MCF 10A (cell line): ENCODE measurements at regions of chr11 and their contacts with region 1.

Region 1: DNA sequence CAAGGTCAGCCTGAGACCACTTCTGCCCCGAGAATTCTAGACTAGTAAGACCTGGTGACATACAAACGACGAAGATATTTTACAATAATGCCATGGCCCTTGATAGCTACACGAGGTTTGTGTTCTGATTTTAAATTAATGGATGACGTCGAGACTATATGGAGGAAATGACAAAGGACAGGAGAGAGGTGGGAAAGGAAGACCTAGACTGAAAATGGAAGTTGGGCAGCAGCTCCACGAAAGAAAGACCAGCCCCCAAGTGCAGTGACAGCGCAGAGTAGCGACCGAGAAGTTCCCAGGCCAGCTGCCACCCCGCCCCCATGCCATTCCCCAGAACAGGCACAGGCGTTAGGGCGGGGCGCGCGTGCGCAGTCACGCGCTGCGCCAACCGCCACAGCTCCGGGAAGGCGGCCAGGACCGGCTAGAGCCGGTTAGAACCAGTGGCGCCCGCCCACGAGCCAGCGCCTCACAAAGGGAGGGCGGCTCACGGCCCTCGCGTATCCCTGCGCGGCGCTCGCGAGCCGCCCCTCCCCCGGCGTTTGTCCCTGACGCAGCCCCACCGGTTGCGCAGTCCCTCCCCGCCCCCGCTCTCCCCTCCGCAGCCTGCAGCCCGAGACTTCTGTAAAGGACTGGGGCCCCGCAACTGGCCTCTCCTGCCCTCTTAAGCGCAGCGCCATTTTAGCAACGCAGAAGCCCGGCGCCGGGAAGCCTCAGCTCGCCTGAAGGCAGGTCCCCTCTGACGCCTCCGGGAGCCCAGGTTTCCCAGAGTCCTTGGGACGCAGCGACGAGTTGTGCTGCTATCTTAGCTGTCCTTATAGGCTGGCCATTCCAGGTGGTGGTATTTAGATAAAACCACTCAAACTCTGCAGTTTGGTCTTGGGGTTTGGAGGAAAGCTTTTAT is 1.5 kb upstream of the MALAT1 start:
- DNase-seq: peak; percentile 98
- H3K4me3 Mint-ChIP-seq: no peak overlapping the region
- H3K27ac Mint-ChIP-seq: no peak overlapping the region
- H3K4me1 Mint-ChIP-seq: peaks cover 17% of the 10 kb centered on the region
- H3K27me3 Mint-ChIP-seq: no peaks in the 10 kb centered on the region
- CTCF ChIP-seq: no peak

Region 2: GRCh38 chr11:65382033-65382807 is 115.2 kb before region 1 on chr11 and contains the start of gene SLC25A45:
- CTCF ChIA-PET with region 1: interaction called, 6 read pairs
- POLR2A ChIA-PET with region 1: interaction called, 342 read pairs
- intact Hi-C with region 1: no loop called
- DNase-seq: peak; percentile 99
- H3K4me3 Mint-ChIP-seq: peak within 1 kb of the TSS; percentile 68
- H3K27ac Mint-ChIP-seq: peak within 1 kb of the TSS; percentile 97
- H3K4me1 Mint-ChIP-seq: peaks cover 26% of the 10 kb centered on the region
- H3K27me3 Mint-ChIP-seq: no peaks in the 10 kb centered on the region
- CTCF ChIP-seq: peak; percentile 86
- total RNA-seq, gene SLC25A45: 3.9 and 4.9 TPM in 2 replicates

Region 3: GRCh38 chr11:65440831-65441499 is 56.4 kb before region 1 on chr11:
- CTCF ChIA-PET with region 1: interaction called, 3 read pairs
- POLR2A ChIA-PET with region 1: interaction called, 213 read pairs
- intact Hi-C with region 1: no loop called
- DNase-seq: peak; percentile 40
- H3K4me3 Mint-ChIP-seq: peak overlapping the region; percentile 41
- H3K27ac Mint-ChIP-seq: peak overlapping the region; percentile 93
- H3K4me1 Mint-ChIP-seq: peaks cover 72% of the 10 kb centered on the region
- H3K27me3 Mint-ChIP-seq: no peaks in the 10 kb centered on the region
- CTCF ChIP-seq: no peak

Region 4: DNA sequence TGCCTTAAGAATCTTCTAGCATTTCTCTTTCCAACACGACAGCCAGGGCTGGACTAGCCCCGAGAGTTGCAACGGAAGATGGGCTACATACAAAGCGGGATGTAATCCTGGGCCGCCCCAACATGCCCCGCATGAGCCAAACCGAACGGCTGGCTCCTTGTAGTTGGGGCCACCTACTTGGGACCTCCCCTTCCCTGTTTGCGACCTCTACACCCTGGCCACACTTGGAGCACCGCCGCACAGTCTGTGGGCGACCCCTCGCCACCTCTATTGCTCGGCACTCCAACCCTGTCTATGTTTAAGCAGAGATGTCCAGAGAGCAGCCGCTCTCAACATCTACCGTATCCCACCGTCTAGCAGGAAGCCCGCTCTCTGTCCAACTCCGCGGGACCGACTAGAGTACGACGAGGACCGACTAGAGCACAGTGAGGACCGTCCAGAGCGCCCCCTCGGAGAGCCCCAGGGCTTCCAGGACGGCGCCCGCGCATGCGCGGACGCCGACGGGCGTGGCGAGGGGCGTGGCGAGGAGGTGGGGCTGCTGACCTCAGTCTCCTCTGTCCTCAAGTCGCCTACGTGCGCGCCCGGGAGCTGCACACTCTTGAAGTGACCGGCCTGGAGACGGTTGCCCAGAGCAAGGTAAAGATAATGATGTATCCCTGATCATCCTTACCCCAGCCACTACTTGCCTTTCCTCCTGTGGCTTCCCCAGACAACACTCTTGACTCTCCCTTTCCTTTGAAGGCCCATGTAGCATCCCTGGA is 42.5 kb before region 1 on chr11:
- CTCF ChIA-PET with region 1: no interaction called
- POLR2A ChIA-PET with region 1: interaction called, 213 read pairs
- intact Hi-C with region 1: loop called (anchors 2 kb)
- DNase-seq: no peak
- H3K4me3 Mint-ChIP-seq: peak overlapping the region; percentile 66
- H3K27ac Mint-ChIP-seq: peak overlapping the region; percentile 27
- H3K4me1 Mint-ChIP-seq: peaks cover 9% of the 10 kb centered on the region
- H3K27me3 Mint-ChIP-seq: no peaks in the 10 kb centered on the region
- CTCF ChIP-seq: no peak

Region 5: GRCh38 chr11:65477149-65477965 is 20.0 kb before region 1 on chr11:
- CTCF ChIA-PET with region 1: interaction called, 25 read pairs
- POLR2A ChIA-PET with region 1: interaction called, 2,284 read pairs
- intact Hi-C with region 1: loop called (anchors 1 kb)
- DNase-seq: peak; percentile 96
- H3K4me3 Mint-ChIP-seq: peak overlapping the region; percentile 95
- H3K27ac Mint-ChIP-seq: peak overlapping the region; percentile 95
- H3K4me1 Mint-ChIP-seq: peaks cover 16% of the 10 kb centered on the region
- H3K27me3 Mint-ChIP-seq: no peaks in the 10 kb centered on the region
- CTCF ChIP-seq: no peak

Region 6: DNA sequence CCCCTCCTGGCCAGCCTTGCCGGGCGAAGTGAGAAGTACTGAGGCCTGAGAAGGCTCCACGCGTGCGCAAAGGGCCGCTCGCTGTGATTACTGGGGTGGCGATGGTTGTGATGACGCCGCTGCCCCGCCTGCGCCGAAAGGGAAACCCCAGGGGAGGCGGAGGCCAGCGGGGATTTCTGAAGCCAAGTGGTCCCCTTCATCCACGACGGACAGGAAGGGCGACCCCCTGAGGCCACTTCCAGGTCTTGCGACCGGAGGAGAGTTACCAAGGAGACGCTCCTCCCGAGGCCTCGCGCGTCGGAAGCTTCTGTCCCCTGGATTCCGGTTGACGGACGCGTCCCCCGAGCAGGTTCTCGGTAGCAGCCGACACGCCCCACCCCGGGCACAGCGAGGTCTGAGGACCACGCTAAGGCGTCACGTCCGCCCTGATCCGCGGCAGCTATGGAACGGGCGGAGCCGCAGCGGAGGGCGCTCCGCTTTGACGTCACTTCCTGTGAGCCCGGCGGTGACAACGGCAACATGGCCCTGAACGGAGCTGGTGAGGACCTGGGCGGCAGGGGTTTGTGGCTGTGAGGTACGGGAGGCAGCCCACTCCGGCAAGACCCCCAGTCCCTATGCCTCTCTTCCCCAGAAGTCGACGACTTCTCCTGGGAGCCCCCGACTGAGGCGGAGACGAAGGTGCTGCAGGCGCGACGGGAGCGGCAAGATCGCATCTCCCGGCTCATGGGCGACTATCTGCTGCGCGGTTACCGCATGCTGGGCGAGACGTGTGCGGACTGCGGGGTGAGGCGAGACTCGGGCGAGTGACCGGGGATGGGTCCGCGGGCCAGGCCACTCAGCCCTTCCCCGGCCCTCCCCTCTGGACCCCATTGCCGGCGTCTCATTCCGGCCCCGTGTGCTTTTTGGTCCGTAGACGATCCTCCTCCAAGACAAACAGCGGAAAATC is 72.9 kb after region 1 on chr11 and contains the start of gene ZNRD2:
- CTCF ChIA-PET with region 1: interaction called, 4 read pairs
- POLR2A ChIA-PET with region 1: interaction called, 25 read pairs
- intact Hi-C with region 1: no loop called
- DNase-seq: peak; percentile 97
- H3K4me3 Mint-ChIP-seq: peak within 1 kb of the TSS; percentile 97
- H3K27ac Mint-ChIP-seq: peak within 1 kb of the TSS; percentile 96
- H3K4me1 Mint-ChIP-seq: peaks cover 31% of the 10 kb centered on the region
- H3K27me3 Mint-ChIP-seq: no peaks in the 10 kb centered on the region
- CTCF ChIP-seq: peak; percentile 41
- total RNA-seq, gene ZNRD2: 65.4 and 68.5 TPM in 2 replicates

Region 7: DNA sequence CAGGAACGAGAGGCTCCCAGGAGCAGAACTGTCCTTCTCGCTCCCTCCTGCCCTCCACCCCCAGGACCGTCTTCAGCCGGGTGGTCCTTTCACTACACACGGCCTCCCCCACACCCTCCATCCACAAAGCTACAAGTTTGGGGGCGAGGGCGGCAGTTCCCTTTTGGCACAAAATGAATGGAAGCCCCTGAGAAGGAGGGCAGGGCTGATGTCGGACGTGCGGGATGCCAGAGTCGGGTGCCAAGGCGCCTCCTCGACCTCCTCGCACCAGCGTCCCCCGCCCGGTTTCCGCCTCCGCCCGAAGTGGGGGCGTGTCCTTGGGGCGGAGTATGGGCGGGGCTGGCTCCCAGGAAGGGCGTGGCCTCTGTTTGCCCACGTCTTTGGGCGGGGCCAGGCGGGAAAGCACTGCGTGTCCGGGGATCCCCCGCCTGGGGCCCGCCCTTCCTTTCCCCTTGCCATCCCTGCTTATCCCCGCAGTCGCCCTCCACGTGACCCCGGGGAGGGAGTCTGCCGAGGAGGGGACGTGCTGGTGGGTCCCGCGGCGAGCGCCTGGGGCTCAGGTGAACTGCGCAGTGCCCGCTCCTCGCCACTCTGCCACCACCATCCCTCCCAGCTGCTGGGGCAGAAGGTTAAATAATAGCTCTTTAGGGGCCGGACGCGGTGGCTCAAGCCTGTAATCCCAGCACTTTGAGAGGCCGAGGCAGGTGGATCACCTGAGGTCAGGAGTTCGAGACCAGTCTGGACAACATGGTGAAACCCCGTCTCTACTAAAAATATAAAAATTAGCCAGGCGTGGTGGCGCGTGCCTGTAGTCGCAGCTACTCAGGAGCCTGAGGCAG is 376.1 kb after region 1 on chr11:
- CTCF ChIA-PET with region 1: no interaction called
- POLR2A ChIA-PET with region 1: no interaction called
- intact Hi-C with region 1: no loop called
- DNase-seq: peak; percentile 92
- H3K4me3 Mint-ChIP-seq: peak overlapping the region; percentile 78
- H3K27ac Mint-ChIP-seq: peak overlapping the region; percentile 87
- H3K4me1 Mint-ChIP-seq: peaks cover 7% of the 10 kb centered on the region
- H3K27me3 Mint-ChIP-seq: no peaks in the 10 kb centered on the region
- CTCF ChIP-seq: no peak

Region 8: DNA sequence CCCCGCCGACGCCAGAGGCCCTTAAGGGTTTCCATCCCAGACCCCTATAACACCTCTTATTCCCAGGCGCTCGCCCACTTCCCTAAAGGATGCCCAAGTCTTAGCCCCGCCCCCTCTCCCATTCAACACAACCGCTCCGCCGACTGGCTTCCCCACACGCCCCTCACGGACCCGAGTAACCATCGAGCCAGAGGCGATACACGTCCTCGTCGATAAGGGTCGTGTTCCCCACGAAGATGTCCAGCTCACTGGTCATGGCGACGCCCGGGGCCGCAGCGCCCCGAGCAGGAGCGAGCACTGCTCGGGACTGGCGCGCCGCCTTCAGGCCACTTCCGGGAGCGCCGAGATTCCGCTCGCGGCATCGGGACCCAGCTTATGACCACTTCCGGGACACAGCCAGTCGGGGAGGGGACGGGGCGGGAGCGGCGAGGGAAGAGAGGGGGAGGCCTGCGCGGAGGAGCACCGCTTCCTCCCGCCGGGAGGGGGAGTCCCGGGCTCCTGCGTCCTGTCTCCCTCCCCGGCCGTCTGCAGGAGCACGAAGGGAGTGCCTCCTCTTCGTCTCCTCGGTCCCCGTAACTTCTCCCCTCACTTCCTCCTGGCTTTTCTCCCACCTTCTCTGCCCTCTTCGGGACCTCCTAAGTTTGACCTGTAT is 390.9 kb after region 1 on chr11 and contains the start of gene FIBP:
- CTCF ChIA-PET with region 1: no interaction called
- POLR2A ChIA-PET with region 1: no interaction called
- intact Hi-C with region 1: no loop called
- DNase-seq: peak; percentile 97
- H3K4me3 Mint-ChIP-seq: peak within 1 kb of the TSS; percentile 90
- H3K27ac Mint-ChIP-seq: peak within 1 kb of the TSS; percentile 90
- H3K4me1 Mint-ChIP-seq: peaks cover 28% of the 10 kb centered on the region
- H3K27me3 Mint-ChIP-seq: no peaks in the 10 kb centered on the region
- CTCF ChIP-seq: peak; percentile 84
- total RNA-seq, gene FIBP: 79.8 and 80.8 TPM in 2 replicates